ENCODE measurements at regions of chr10 and their contacts with region 1.

Region 1: DNA sequence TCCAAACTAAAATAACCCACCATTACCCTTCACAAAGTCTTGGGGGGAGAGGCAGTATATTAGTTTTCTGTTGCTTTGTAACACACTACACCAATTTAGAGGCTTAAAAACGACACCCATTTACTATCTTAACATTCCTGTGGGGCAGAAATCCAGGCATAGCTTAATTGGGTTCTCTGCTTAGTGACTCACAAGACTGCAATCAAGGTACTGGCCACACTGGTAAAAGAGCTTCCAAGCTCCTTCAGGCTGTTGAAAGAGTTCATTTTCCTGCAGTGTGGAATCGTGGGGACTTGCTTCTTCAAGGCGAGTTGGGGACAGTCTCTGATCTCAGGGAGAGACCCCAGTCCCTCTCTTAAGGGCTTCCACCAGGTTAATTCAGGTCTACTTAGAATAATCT is 139.1 kb downstream of the XPNPEP1 start:
- DNase-seq: no peak
- H3K4me3 ChIP-seq: no peak overlapping the region
- H3K27ac ChIP-seq: no peak overlapping the region
- H3K27me3 ChIP-seq: no peaks in the 10 kb centered on the region
- CTCF ChIP-seq: no peak

Region 2: DNA sequence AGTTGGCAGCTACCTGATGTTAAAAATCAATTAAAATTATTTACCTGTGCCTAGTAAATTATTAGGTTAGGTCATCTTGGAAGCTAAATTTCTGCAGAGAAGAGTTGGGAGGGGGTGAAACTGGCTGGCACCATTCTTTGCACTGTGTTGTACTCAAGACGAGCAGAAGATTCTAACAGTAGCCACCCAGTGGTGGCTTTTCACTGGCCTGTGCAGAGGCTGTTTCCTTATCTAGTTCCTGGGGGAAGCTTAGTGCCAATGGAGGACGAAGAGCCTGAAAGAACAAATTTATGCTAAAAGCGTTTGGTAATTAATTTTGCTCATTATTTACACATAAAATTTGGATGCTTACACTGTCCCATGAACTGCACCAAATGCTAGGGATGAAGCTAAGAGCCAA is 456.2 kb before region 1 on chr10:
- CTCF ChIA-PET with region 1: no interaction called
- POLR2A ChIA-PET with region 1: no interaction called
- DNase-seq: no peak
- H3K4me3 ChIP-seq: no peak overlapping the region
- H3K27ac ChIP-seq: no peak overlapping the region
- H3K27me3 ChIP-seq: no peaks in the 10 kb centered on the region
- CTCF ChIP-seq: no peak

Region 3: GRCh38 chr10:109593682-109594081 is 190.6 kb before region 1 on chr10:
- CTCF ChIA-PET with region 1: no interaction called
- POLR2A ChIA-PET with region 1: no interaction called
- DNase-seq: no peak
- H3K4me3 ChIP-seq: no peak overlapping the region
- H3K27ac ChIP-seq: no peak overlapping the region
- H3K27me3 ChIP-seq: no peaks in the 10 kb centered on the region
- CTCF ChIP-seq: no peak

Region 4: GRCh38 chr10:109668154-109668665 is 116.0 kb before region 1 on chr10:
- CTCF ChIA-PET with region 1: no interaction called
- POLR2A ChIA-PET with region 1: no interaction called
- DNase-seq: no peak
- H3K4me3 ChIP-seq: no peak overlapping the region
- H3K27ac ChIP-seq: no peak overlapping the region
- H3K27me3 ChIP-seq: no peaks in the 10 kb centered on the region
- CTCF ChIP-seq: no peak

Region 5: DNA sequence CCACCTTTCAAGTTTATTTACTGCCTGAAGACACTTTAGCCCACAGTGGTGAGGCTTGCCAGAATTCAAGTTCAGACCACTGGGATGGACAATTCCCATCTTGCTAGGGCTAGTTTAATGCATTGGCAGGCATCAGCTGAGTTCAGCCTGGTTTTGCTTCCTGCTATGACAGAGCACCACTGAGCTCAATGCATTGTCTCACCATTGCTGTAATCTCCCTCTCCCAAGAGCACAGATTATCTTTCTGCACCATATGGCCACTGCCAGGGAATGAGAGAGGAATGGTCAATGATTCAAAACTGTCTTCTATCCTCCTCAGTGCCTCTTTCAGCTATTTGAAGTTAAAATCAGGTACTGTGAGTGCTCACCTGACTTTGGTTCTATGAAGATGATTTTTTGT is 21.7 kb before region 1 on chr10:
- CTCF ChIA-PET with region 1: no interaction called
- POLR2A ChIA-PET with region 1: no interaction called
- DNase-seq: no peak
- H3K4me3 ChIP-seq: no peak overlapping the region
- H3K27ac ChIP-seq: no peak overlapping the region
- H3K27me3 ChIP-seq: no peaks in the 10 kb centered on the region
- CTCF ChIP-seq: no peak

Region 6: GRCh38 chr10:109773288-109774120 is 10.7 kb before region 1 on chr10:
- CTCF ChIA-PET with region 1: interaction called, 11 read pairs
- POLR2A ChIA-PET with region 1: no interaction called
- DNase-seq: no peak
- H3K4me3 ChIP-seq: no peak overlapping the region
- H3K27ac ChIP-seq: no peak overlapping the region
- H3K27me3 ChIP-seq: no peaks in the 10 kb centered on the region
- CTCF ChIP-seq: peak; percentile 67